ENCODE measurements at regions of chr11 and their contacts with region 1.

Region 1: DNA sequence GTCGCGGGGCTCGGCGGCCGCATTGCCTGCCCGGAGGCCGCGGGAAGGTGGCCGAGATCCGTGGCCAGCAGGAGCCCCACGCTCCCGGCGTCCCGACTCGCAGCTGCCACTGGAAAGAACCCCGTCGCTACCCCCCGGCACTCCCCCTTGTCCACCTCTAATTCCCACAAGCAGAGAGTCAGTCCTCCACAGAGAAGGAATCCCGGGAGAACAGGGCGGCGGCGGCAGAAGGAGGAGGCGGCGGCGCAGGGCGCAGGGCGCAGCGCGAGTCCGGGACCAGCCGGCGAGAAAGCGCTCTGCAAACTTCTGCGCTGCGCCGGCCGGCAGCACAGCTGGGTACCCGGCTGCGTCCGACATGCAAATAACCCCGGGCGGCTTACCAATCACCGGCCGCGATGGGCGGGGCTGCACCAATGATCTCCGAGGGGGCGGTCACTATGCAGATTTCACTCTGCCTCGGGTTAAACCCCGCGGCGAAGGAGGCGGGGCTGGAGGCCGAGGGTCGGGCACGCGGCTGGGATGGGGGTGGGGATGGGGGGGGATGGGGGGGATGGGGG is at the start of gene ABTB2:
- DNase-seq: peak; percentile 94
- H3K4me3 ChIP-seq: peak within 1 kb of the TSS; percentile 68
- H3K27ac ChIP-seq: no peak within 1 kb of the TSS
- H3K4me1 ChIP-seq: peaks cover 15% of the 10 kb centered on the region
- CTCF ChIP-seq: no peak
- total RNA-seq, gene ABTB2: 0.09 and 0.36 TPM in 2 replicates

Region 2: DNA sequence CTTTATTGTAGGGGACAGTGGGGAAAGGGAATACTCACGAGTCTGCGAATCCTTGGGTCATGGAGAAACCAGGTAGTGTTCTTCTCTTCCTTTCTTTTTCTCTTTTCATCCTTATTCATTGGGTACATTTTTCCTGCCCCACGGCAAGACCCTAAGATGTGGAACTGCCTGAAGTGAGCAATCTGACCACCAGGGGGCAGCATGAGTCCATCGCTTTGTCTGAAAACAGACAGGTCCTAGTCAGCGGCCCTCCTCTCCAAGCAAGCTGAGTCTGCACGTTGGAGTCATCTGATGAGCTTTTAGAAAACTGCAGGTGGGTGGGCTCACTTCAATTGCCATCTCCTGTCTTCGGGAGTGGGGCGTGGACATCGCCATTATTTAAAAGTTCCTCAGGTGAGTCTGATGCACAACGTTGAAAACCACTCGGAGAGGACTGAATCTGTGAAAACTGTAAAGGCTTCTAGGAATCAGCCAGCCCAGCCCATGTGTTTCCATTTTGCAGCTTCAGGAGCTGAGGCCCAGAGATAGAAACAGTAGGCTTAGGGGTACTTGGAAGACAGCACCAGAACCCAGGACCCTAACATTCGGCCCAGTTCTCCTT is 549.5 kb before region 1 on chr11:
- CTCF ChIA-PET with region 1: no interaction called
- POLR2A ChIA-PET with region 1: no interaction called
- intact Hi-C with region 1: loop called (anchors 5 kb)
- DNase-seq: peak; percentile 77
- H3K4me3 ChIP-seq: no peak overlapping the region
- H3K27ac ChIP-seq: no peak overlapping the region
- H3K4me1 ChIP-seq: no peaks in the 10 kb centered on the region
- CTCF ChIP-seq: peak; percentile 94

Region 3: GRCh38 chr11:33857933-33858371 is 499.8 kb before region 1 on chr11:
- CTCF ChIA-PET with region 1: no interaction called
- POLR2A ChIA-PET with region 1: no interaction called
- intact Hi-C with region 1: loop called (anchors 2 kb)
- DNase-seq: peak; percentile 72
- H3K4me3 ChIP-seq: no peak overlapping the region
- H3K27ac ChIP-seq: no peak overlapping the region
- H3K4me1 ChIP-seq: no peaks in the 10 kb centered on the region
- CTCF ChIP-seq: peak; percentile 99

Region 4: GRCh38 chr11:33996498-33997454 is 361.0 kb before region 1 on chr11:
- CTCF ChIA-PET with region 1: no interaction called
- POLR2A ChIA-PET with region 1: no interaction called
- intact Hi-C with region 1: loop called (anchors 1 kb)
- DNase-seq: peak; percentile 82
- H3K4me3 ChIP-seq: no peak overlapping the region
- H3K27ac ChIP-seq: no peak overlapping the region
- H3K4me1 ChIP-seq: peaks cover 9% of the 10 kb centered on the region
- CTCF ChIP-seq: peak; percentile 90

Region 5: GRCh38 chr11:34105079-34105956 is 252.5 kb before region 1 on chr11 and contains the start of gene NAT10:
- CTCF ChIA-PET with region 1: no interaction called
- POLR2A ChIA-PET with region 1: no interaction called
- intact Hi-C with region 1: loop called (anchors 1 kb)
- DNase-seq: peak; percentile 99
- H3K4me3 ChIP-seq: peak within 1 kb of the TSS; percentile 88
- H3K27ac ChIP-seq: peak within 1 kb of the TSS; percentile 86
- H3K4me1 ChIP-seq: peaks cover 47% of the 10 kb centered on the region
- CTCF ChIP-seq: 0 out of 2 replicates have a peak, but pooled peaks have one; percentile 20
- total RNA-seq, gene NAT10: 62.5 and 64.9 TPM in 2 replicates

Region 6: GRCh38 chr11:34174412-34175041 is 183.3 kb before region 1 on chr11:
- CTCF ChIA-PET with region 1: interaction called, 6 read pairs
- POLR2A ChIA-PET with region 1: no interaction called
- intact Hi-C with region 1: loop called (anchors 1 kb)
- DNase-seq: peak; percentile 77
- H3K4me3 ChIP-seq: no peak overlapping the region
- H3K27ac ChIP-seq: no peak overlapping the region
- H3K4me1 ChIP-seq: no peaks in the 10 kb centered on the region
- CTCF ChIP-seq: peak; percentile 78

Region 7: DNA sequence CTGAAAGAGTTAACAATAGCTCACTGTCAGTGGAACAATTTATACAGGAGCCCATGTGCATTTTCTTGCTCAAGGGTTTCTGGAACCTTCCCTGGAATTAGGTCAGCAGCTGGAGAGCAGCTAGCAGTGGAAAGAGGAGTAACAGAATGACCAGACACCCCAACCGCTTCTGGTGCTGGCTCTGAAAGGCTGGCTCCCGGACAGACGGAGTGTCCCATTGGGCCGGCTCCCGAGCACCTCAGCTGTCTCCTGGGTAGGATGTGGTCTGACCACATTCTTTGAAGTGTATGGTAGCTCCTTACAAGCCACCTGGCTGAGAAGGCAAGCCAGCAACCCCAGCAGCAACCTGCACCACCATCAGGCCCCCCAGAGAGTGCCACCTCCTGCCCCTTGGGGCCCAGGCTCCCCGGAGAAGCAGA is 44.7 kb before region 1 on chr11:
- CTCF ChIA-PET with region 1: no interaction called
- POLR2A ChIA-PET with region 1: no interaction called
- intact Hi-C with region 1: no loop called
- DNase-seq: peak; percentile 39
- H3K4me3 ChIP-seq: no peak overlapping the region
- H3K27ac ChIP-seq: no peak overlapping the region
- H3K4me1 ChIP-seq: peaks cover 7% of the 10 kb centered on the region
- CTCF ChIP-seq: no peak

Region 8: DNA sequence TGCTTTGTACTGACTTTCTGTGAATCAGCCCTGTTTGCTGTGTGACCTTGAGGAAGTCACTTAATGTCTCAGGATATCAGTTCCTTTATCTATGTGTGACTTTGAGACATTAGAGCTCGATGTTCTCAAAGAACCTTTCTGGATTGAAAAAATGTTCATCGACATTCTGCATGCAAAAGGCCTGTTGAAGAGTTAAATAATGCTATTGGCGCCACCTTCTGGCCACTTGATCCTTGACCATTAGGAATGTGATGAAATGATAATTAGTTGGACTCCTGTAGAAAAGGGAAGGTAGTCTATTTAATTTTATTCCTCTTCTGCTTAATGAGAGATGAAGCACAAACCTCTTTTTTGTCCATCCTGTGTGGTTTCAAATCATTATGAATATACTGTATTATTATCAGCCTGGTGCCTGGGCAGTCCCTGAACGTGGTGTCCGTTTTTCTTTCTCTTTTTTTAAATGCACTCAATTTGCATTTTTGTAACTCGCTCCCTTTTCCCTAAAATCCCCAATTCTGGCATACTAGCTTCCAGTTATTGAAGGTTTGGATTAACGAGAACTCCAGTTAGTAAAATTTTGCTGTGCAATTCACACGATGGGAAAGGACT is 135.1 kb after region 1 on chr11:
- CTCF ChIA-PET with region 1: no interaction called
- POLR2A ChIA-PET with region 1: interaction called, 3 read pairs
- intact Hi-C with region 1: loop called (anchors 5 kb)
- DNase-seq: peak; percentile 67
- H3K4me3 ChIP-seq: no peak overlapping the region
- H3K27ac ChIP-seq: no peak overlapping the region
- H3K4me1 ChIP-seq: no peaks in the 10 kb centered on the region
- CTCF ChIP-seq: peak; percentile 95

Measured in OCI-LY7 (cell line).